ENCODE measurements at regions of chr18 and their contacts with region 1.

Region 1: GRCh38 chr18:48913201-48913600 is 37.6 kb downstream of the SMAD7 start:
- DNase-seq: peak in 1 of 2 donors; percentile 77
- ATAC-seq: peak; percentile 47 to 75 (median 48)
- H3K4me3 ChIP-seq: no peak overlapping the region
- H3K4me3 Mint-ChIP-seq: no peak overlapping the region
- H3K27ac ChIP-seq: no peak overlapping the region
- H3K27ac Mint-ChIP-seq: peak overlapping the region in 1 of 2 donors; percentile 16
- H3K4me1 ChIP-seq: peaks cover 35% of the 10 kb centered on the region
- H3K4me1 Mint-ChIP-seq: peaks cover 59 to 63% of the 10 kb centered on the region in 2 donors
- H3K27me3 ChIP-seq: no peaks in the 10 kb centered on the region
- H3K27me3 Mint-ChIP-seq: no peaks in the 10 kb centered on the region
- CTCF ChIP-seq: no peak

Region 2: DNA sequence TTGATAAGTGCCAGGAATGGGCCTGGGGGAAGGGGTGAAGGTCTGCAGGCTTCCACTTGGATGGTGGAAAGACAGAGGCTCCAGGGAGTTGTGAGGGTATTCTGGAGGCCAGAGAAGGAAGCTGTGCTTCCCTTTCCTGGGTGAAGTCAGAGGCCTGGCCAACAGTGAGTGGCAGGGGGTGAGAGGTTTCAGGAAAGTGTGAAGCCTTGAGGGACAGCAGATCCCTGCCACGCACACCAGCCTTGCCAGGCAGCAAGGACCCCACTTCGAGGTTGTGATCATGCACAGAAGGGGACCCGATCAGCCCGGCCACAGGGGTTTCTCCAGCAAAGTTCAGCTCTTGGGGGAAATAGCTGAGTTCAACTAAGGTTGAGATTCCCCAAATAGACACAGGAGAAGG is 28.9 kb before region 1 on chr18:
- intact Hi-C with region 1: loop called (anchors 5 kb)
- DNase-seq: no peak
- ATAC-seq: no peak
- H3K4me3 ChIP-seq: no peak overlapping the region
- H3K4me3 Mint-ChIP-seq: no peak overlapping the region
- H3K27ac ChIP-seq: no peak overlapping the region
- H3K27ac Mint-ChIP-seq: no peak overlapping the region
- H3K4me1 ChIP-seq: peaks cover 4% of the 10 kb centered on the region
- H3K4me1 Mint-ChIP-seq: peaks cover 16 to 41% of the 10 kb centered on the region in 2 donors
- H3K27me3 ChIP-seq: no peaks in the 10 kb centered on the region
- H3K27me3 Mint-ChIP-seq: no peaks in the 10 kb centered on the region
- CTCF ChIP-seq: no peak

Region 3: DNA sequence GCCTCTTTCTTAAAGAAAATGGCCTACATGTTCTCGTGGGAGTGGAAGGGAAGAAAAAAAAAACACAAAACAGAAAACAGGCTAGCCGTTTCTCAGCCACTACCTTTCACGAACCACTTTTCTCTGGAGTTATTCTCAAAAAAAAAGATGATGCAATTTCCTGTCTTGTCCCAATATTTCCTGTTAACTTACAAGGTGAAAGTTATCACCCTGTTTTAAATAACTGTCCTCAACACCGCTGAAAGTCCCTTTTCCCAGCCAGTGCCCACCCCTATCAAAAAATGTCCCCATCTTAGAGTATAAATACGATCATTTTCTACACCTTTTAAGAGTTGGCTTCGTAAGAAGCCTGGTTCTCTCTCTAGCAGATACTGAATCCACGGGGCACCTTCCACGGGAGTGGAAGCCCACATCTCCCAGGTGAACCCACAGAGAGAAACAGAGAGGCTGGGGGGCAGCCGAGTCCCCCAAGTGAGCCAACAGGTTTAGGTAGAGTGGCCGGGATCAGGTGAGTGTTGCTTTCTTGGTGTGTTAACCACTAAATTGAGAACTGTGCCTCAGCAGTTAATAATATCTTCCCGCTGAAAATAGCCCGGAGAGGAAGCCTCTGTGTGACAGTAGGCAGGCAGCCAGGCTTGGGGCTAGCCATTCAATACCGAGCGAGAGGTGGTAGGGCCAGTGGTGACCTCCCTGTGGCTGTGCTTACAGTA is 21.7 kb after region 1 on chr18:
- intact Hi-C with region 1: loop called (anchors 2 kb)
- DNase-seq: peak in 1 of 2 donors; percentile 56
- ATAC-seq: peak; percentile 16 to 47 (median 32)
- H3K4me3 ChIP-seq: no peak overlapping the region
- H3K4me3 Mint-ChIP-seq: peak overlapping the region; percentile 88
- H3K27ac ChIP-seq: peak overlapping the region; percentile 83
- H3K27ac Mint-ChIP-seq: peak overlapping the region; percentile 95 to 96
- H3K4me1 ChIP-seq: peaks cover 94% of the 10 kb centered on the region
- H3K4me1 Mint-ChIP-seq: peaks cover 92 to 95% of the 10 kb centered on the region in 2 donors
- H3K27me3 ChIP-seq: no peaks in the 10 kb centered on the region
- H3K27me3 Mint-ChIP-seq: no peaks in the 10 kb centered on the region
- CTCF ChIP-seq: no peak

Measured in natural killer cell (primary cell).